ENCODE measurements at regions of chr17 and their contacts with region 1.

Region 1: DNA sequence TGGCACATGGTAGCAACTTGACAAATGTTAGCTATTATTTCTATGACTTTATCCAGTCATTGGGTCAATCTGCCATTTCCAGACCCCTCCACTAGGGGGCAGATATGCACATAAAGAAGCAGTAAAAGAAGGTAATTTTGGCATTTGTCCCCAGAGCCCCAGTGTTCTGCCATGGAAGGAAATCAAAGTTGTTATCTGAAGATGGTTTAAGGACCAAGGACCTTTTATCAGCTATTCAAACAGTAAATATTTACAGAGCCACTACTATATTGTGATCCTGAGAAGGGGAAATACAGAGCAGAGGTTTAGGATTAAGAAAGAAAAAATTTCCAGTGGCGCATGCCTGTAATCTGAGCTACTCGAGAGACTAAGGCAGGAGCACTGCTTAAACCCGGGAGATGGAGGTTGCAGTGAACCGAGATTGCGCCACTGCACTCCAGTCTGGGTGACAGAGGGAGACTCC is 20.0 kb downstream of the TRAF4 start:
- DNase-seq: peak; percentile 93
- ATAC-seq: peak; percentile 88
- H3K4me3 Mint-ChIP-seq: no peak overlapping the region
- H3K27ac Mint-ChIP-seq: no peak overlapping the region
- H3K4me1 Mint-ChIP-seq: peaks cover 16% of the 10 kb centered on the region
- H3K27me3 Mint-ChIP-seq: no peaks in the 10 kb centered on the region
- CTCF ChIP-seq: peak; percentile 97

Region 2: DNA sequence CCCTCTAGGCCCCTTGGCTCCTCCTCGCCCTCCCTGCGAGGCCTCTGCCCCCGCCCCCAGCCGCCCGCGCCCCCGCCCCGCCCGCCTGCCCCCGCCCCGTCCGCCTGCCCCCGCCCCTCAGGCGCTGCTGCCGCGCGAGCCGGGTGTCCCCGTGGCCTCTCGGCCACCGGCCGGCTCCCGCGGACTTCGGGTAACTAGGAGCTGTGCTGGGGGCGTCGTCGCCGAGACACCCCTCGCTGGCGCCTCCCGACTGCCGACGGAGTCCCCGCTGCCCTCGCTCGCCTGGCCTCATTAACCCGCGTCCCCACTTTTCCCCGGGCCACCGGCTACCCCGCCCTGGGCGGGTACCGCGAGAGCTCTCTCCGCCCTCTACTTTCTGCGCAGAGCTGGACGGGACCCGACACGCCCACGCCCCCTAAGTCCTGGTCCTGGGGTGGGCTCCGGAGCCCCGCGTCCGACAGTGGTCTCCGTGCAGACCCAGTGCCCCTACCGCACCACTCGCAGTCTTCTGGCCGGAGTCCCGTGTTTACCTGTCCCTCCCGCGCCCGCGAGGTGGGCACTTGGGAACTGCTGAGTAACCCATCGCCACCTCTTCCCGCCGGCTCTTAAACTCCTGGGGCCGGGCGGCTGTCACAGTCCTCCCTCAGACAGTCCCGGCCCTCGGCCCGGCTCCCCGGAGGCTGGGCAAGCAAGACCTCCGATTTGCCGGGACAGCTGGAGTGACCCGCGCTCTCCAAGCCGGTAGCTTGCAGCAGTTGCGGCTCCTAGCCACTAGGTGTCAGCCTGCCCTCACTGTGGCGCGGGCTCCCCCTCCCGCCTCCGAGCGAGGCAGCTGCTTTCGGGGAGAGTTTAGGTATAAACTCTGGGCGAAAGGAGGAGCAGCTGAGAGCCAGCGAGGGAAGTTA is 37.4 kb before region 1 on chr17 and contains the start of gene TLCD1:
- CTCF ChIA-PET with region 1: interaction called, 99 read pairs
- POLR2A ChIA-PET with region 1: interaction called, 17 read pairs
- intact Hi-C with region 1: loop called (anchors 5 kb)
- DNase-seq: peak; percentile 95
- ATAC-seq: peak; percentile 50
- H3K4me3 Mint-ChIP-seq: peak within 1 kb of the TSS; percentile 100
- H3K27ac Mint-ChIP-seq: peak within 1 kb of the TSS; percentile 99
- H3K4me1 Mint-ChIP-seq: peaks cover 39% of the 10 kb centered on the region
- H3K27me3 Mint-ChIP-seq: no peaks in the 10 kb centered on the region
- CTCF ChIP-seq: peak; percentile 100
- total RNA-seq, gene TLCD1: 6.5 to 8.7 TPM

Region 3: DNA sequence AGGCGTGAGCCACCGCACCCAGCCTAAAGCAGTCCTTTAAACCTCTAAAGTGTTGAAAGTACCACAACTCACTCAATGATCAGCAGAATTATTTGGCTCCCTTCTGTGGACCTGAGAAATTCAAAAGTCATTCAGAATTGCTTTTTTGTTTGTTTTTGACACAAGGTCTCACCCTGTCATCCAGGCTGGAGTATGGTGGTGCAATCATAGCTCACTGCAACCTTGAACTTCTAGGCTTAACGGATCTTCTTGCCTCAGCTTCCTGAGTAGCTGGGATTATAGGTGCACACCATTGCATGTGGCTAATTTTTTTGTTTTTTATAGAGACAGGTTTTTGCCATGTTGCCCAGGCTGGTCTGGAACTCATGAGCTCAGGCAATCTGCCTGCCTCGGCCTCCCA is 24.3 kb after region 1 on chr17:
- CTCF ChIA-PET with region 1: interaction called, 20 read pairs
- POLR2A ChIA-PET with region 1: interaction called, 3 read pairs
- intact Hi-C with region 1: no loop called
- DNase-seq: no peak
- ATAC-seq: no peak
- H3K4me3 Mint-ChIP-seq: no peak overlapping the region
- H3K27ac Mint-ChIP-seq: no peak overlapping the region
- H3K4me1 Mint-ChIP-seq: peaks cover 16% of the 10 kb centered on the region
- H3K27me3 Mint-ChIP-seq: no peaks in the 10 kb centered on the region
- CTCF ChIP-seq: no peak

Region 4: DNA sequence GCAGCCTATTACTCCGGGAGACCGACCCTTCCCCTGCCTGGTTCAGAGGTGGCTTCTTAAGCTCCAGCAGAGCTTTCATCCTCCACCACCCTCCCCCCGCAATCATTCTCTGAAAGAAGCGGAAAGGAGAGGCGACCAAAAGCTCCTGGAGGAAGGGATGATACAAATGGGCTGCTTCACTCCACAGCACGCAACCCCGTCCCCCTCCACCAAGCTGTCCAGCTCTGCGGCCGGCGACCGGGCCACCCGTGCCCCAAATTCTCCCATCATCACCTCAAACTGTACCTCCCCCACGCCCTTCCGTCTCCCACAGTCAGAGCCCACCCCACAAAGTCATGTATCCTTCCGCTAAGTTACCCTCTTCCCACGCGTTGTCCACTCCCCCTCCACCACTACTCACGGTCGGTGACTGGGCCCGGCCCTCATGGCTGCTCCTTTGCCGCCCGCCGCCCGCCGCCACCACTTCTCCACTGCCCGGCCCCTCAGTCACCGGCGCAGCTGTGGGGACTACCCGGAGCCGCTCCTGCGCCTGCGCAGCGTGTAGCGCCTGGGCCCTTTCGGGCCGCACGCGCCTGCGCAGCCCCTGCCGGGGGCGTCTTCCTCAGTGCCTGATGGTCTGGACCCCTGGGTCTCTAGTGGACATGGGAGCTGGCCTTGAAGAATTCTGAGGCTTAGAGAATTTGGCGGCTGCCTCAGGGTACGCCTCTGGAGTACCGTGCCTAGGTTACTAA is 78.6 kb after region 1 on chr17 and contains the start of gene FAM222B:
- CTCF ChIA-PET with region 1: interaction called, 58 read pairs
- POLR2A ChIA-PET with region 1: interaction called, 3 read pairs
- intact Hi-C with region 1: no loop called
- DNase-seq: peak; percentile 90
- ATAC-seq: peak; percentile 99
- H3K4me3 Mint-ChIP-seq: peak within 1 kb of the TSS; percentile 86
- H3K27ac Mint-ChIP-seq: peak within 1 kb of the TSS; percentile 92
- H3K4me1 Mint-ChIP-seq: peaks cover 21% of the 10 kb centered on the region
- H3K27me3 Mint-ChIP-seq: no peaks in the 10 kb centered on the region
- CTCF ChIP-seq: no peak
- total RNA-seq, gene FAM222B: 14.7 to 15.2 TPM

Region 5: DNA sequence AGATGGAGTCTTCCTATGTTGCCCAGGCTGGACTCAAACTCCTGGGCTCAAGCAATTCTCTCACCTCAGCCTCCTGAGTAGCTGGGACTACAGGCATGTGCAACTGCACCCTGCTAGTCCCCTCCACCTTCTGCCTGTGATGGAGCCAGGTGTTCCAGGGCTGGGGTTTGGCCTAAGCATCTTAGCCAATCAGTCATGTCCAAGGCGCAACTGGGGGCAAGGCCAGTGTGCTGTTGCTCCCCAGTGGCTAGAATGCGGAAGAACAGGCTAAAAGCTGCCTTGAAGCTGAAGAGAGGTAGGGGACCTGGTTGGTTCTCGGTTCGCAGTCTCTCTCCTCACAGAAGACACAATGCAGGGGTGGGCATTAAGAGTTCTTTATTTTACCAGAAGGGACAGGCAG is 115.1 kb after region 1 on chr17:
- CTCF ChIA-PET with region 1: interaction called, 21 read pairs
- POLR2A ChIA-PET with region 1: interaction called, 3 read pairs
- intact Hi-C with region 1: no loop called
- DNase-seq: peak; percentile 55
- ATAC-seq: peak; percentile 57
- H3K4me3 Mint-ChIP-seq: no peak overlapping the region
- H3K27ac Mint-ChIP-seq: peak overlapping the region; percentile 7
- H3K4me1 Mint-ChIP-seq: peaks cover 29% of the 10 kb centered on the region
- H3K27me3 Mint-ChIP-seq: no peaks in the 10 kb centered on the region
- CTCF ChIP-seq: no peak

Region 6: DNA sequence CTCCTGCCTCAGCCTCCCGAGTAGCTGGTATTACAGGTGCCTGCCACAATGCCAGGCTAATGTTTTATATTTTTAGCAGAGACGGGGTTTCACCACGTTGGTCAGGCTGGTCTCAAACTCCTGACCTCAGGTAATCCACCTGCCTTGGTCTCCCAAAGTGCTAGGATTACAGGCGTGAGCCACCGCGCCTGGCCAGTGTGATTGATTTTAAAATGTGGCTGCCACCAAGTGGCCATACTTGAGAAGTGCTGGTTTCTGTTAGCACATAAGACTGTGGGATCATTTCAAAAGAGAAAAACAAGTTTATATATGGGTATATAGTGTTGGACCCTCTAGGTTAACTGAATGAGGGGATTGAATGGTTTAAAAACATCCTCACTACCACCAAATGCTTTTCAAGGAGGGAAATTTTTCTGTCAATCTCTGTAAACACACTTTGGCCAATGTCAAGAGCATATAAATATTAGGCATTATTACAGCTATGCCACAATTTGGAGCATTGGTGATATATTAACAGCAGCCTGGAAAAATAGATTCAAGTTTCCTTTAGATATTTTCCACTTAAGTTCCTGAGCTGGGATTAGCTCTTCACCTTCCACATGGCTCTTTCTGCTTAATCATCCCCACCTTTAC is 152.6 kb after region 1 on chr17:
- CTCF ChIA-PET with region 1: interaction called, 56 read pairs
- POLR2A ChIA-PET with region 1: no interaction called
- intact Hi-C with region 1: no loop called
- DNase-seq: peak; percentile 65
- ATAC-seq: peak; percentile 79
- H3K4me3 Mint-ChIP-seq: no peak overlapping the region
- H3K27ac Mint-ChIP-seq: no peak overlapping the region
- H3K4me1 Mint-ChIP-seq: peaks cover 15% of the 10 kb centered on the region
- H3K27me3 Mint-ChIP-seq: no peaks in the 10 kb centered on the region
- CTCF ChIP-seq: peak; percentile 79

Measured in activated CD8-positive, alpha-beta T cell treated with anti-CD3 and anti-CD28 coated beads for 36 hours (primary cell).